Endothelial cell of umbilical vein (primary cell): ENCODE measurements at regions of chr5 and their contacts with region 1.

Region 1: DNA sequence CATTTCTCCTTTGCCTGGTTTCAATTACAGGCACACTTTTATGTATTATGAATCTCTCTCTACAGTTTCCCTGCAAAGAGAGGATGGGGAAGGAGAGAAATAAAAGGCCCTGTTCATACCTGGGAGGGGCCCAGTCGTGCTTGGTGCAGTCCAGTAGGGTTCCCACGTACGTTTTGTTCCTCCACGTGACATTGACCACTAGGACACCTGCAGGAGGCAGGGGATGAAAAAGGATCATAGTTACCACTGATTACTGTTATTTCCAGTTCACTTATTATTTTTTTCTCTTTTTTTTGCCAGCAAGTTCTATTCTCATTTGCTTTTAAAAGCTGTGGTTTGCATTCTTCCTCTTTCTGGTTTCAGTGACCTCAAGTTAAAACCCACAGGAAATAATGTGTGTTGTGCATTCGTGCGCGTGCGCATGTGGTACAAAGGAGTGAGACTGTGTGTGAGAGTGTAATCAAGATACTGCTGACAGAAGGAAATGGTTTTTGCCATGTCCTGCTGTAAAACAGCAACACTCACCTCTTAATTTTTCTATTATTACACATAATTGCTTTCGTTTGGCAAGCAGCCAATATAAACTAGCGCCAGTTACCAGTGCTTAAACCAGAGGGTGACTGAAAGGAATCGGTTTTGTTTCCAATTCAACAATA is 96.8 kb downstream of the ZNF608 start:
- DNase-seq: peak; percentile 98
- H3K4me3 ChIP-seq: peak overlapping the region in 2 of 3 experiments; percentile 17 to 49
- H3K27ac ChIP-seq: peak overlapping the region; percentile 92
- H3K4me1 ChIP-seq: peaks cover 46% of the 10 kb centered on the region
- H3K27me3 ChIP-seq: no peaks in the 10 kb centered on the region
- CTCF ChIP-seq: no peak
- POLR2A ChIP-seq: peak; percentile 60

Region 2: DNA sequence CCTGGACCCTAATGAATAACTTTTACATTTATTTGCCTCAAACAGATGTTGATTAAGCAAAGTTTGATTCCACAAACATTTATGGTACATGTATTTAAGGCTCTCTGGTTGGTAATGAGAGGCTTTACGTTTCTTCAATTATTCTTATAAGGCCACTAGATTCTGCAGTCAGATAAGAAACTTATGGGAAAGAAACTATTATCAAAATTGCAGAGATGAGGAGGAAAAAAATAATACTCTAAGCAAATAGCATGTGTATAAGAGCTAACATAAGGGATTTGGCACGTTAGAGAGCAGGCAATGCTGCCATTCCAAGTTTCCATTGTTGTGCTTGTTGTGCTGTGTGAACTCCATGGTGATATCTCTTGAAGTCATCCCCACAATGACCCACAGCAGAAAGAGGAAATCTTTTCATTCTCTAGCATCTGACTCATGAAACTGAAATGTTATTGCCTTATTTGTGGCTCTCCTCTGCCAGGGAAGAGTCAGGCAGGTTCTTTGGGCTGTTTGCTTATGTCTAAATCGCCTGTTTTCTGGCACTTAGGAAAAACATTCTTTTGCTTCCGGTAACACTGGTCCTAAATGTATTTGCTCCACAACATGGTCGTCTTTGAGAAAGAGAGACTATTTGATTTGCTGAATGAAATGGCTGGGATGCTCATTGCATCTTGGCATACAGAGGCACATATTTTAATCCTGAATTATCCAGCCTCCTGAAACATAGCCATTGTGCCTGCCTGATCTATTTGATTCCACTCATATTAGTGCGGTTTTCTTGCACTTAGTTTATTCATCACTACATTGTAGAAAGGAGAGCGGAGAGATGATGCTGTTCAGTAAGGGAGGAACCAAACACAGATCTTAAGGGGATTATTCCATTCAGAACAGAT is 949.0 kb before region 1 on chr5:
- CTCF ChIA-PET with region 1: no interaction called
- POLR2A ChIA-PET with region 1: no interaction called
- dilution Hi-C with region 1: no loop called
- intact Hi-C with region 1: loop called (anchors 1 kb)
- DNase-seq: peak; percentile 99
- H3K4me3 ChIP-seq: no peak overlapping the region
- H3K27ac ChIP-seq: peak overlapping the region; percentile 93
- H3K4me1 ChIP-seq: peaks cover 21% of the 10 kb centered on the region
- H3K27me3 ChIP-seq: no peaks in the 10 kb centered on the region
- CTCF ChIP-seq: no peak
- POLR2A ChIP-seq: peak; percentile 27

Region 3: DNA sequence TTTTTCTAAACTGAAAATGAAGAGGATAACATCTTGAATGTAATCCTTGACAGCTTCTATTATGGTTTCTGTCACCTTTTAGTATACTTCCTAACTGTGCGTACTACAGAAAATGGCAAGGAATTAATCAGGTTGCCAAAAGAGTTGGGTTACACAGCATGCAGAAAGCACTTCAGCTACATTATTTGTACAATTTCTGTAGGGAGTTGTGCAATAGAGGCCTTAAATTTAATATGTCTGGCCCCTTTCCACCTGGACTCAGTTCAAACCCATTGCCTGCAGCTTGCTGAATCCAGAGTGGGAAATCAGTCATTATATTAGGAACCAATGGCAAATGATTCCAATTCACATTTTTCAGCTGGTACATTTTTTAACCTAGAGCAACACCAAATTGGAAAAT is 588.0 kb before region 1 on chr5:
- CTCF ChIA-PET with region 1: no interaction called
- POLR2A ChIA-PET with region 1: no interaction called
- dilution Hi-C with region 1: no loop called
- intact Hi-C with region 1: loop called (anchors 2 kb)
- DNase-seq: no peak
- H3K4me3 ChIP-seq: no peak overlapping the region
- H3K27ac ChIP-seq: no peak overlapping the region
- H3K4me1 ChIP-seq: peaks cover 15% of the 10 kb centered on the region
- H3K27me3 ChIP-seq: no peaks in the 10 kb centered on the region
- CTCF ChIP-seq: no peak
- POLR2A ChIP-seq: no peak

Region 4: GRCh38 chr5:124343451-124343867 is 306.2 kb before region 1 on chr5:
- CTCF ChIA-PET with region 1: no interaction called
- POLR2A ChIA-PET with region 1: no interaction called
- dilution Hi-C with region 1: no loop called
- intact Hi-C with region 1: no loop called
- DNase-seq: no peak
- H3K4me3 ChIP-seq: no peak overlapping the region
- H3K27ac ChIP-seq: no peak overlapping the region
- H3K4me1 ChIP-seq: no peaks in the 10 kb centered on the region
- H3K27me3 ChIP-seq: peaks cover 2 to 3% of the 10 kb centered on the region in 2 experiments
- CTCF ChIP-seq: no peak
- POLR2A ChIP-seq: no peak

Region 5: DNA sequence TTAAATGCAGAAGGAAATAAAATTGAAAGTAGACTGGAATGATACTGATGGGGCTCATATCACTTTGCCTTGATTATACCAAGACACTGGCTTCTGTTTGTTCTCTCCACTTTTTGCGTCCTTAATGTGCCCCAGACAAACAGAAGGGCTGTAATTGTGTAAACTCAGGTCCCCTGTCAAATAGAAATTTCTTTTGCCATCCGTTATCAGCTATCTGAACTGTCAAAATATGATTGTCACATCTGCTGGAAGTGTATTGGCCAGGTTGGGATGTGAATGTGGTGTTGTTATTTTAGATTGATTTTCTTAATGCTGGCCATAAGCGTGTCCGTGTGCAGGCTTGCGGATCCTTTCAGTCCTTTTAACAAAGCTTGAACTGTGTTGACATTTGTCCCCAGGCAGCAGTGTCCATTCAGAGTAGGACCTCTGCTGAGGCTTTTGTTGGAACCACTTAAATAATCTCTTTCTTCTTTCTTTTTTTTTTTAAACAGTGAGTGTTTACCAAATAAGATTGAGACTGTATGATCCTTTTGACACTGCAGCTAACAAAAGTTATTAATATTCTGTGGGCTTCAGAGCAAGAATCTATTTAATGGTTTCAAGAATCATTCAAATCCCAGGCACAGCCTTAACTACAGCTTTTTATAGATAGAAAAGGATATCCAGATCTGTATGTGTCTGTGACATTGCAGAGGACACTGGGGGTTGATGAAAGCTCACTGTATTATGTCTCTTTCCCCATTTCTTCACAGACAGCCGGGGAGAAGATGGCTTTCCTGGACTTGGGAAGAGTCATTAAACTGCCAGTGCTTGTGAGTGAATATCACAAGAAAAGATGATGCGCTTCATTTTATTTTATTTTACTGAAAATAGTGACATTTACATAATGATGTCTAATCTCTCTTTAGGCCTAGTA is 74.8 kb before region 1 on chr5:
- CTCF ChIA-PET with region 1: no interaction called
- POLR2A ChIA-PET with region 1: no interaction called
- dilution Hi-C with region 1: no loop called
- intact Hi-C with region 1: no loop called
- DNase-seq: no peak
- H3K4me3 ChIP-seq: no peak overlapping the region
- H3K27ac ChIP-seq: no peak overlapping the region
- H3K4me1 ChIP-seq: no peaks in the 10 kb centered on the region
- H3K27me3 ChIP-seq: no peaks in the 10 kb centered on the region
- CTCF ChIP-seq: no peak
- POLR2A ChIP-seq: no peak

Region 6: GRCh38 chr5:124806373-124807077 is 156.9 kb after region 1 on chr5:
- CTCF ChIA-PET with region 1: no interaction called
- POLR2A ChIA-PET with region 1: no interaction called
- dilution Hi-C with region 1: no loop called
- intact Hi-C with region 1: loop called (anchors 1 kb)
- DNase-seq: peak; percentile 94
- H3K4me3 ChIP-seq: no peak overlapping the region
- H3K27ac ChIP-seq: no peak overlapping the region
- H3K4me1 ChIP-seq: peaks cover 5% of the 10 kb centered on the region
- H3K27me3 ChIP-seq: no peaks in the 10 kb centered on the region
- CTCF ChIP-seq: no peak
- POLR2A ChIP-seq: no peak

Region 7: DNA sequence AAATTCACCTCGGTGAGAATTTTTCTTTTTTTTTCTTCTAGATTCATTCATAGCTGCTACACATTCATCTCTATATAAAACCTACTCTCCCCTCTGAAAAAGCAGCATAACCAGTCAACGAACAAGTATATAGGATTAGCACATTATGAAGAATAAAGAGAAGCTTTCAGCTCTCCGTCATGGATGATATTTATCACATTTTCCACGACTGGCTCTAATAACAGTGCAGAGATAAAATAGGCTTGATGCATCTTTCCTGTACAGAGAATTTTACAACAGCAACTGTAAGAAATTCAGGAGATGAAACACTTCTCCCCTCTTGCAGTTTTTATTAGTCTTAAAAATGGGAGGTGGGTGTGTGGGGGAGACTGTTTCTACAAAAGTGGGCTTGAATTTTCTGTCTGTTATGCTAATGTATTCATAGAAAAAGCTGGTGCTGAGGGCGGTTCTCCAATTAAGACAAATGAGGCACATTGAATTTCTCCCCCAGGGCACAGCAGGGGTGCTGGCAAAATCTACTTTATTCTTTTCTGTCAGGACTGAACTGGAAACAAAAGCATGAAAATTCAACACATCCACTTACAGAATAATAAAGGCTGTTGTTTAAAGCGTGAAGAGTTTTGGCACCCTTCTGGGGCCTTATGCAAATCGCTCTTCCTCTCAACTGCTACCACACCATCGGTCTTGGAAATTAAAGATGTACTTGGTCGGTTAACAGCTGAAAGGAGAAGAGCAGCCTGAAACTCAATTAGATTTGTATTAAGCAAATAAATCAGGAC is 330.7 kb after region 1 on chr5:
- CTCF ChIA-PET with region 1: no interaction called
- POLR2A ChIA-PET with region 1: no interaction called
- dilution Hi-C with region 1: no loop called
- intact Hi-C with region 1: no loop called
- DNase-seq: no peak
- H3K4me3 ChIP-seq: no peak overlapping the region
- H3K27ac ChIP-seq: no peak overlapping the region
- H3K4me1 ChIP-seq: no peaks in the 10 kb centered on the region
- H3K27me3 ChIP-seq: no peaks in the 10 kb centered on the region
- CTCF ChIP-seq: no peak
- POLR2A ChIP-seq: no peak

Region 8: GRCh38 chr5:125043781-125044391 is 394.3 kb after region 1 on chr5:
- CTCF ChIA-PET with region 1: no interaction called
- POLR2A ChIA-PET with region 1: no interaction called
- dilution Hi-C with region 1: no loop called
- intact Hi-C with region 1: loop called (anchors 5 kb)
- DNase-seq: peak; percentile 82
- H3K4me3 ChIP-seq: no peak overlapping the region
- H3K27ac ChIP-seq: peak overlapping the region; percentile 10
- H3K4me1 ChIP-seq: peaks cover 34% of the 10 kb centered on the region
- H3K27me3 ChIP-seq: no peaks in the 10 kb centered on the region
- CTCF ChIP-seq: no peak
- POLR2A ChIP-seq: no peak

Region 9: DNA sequence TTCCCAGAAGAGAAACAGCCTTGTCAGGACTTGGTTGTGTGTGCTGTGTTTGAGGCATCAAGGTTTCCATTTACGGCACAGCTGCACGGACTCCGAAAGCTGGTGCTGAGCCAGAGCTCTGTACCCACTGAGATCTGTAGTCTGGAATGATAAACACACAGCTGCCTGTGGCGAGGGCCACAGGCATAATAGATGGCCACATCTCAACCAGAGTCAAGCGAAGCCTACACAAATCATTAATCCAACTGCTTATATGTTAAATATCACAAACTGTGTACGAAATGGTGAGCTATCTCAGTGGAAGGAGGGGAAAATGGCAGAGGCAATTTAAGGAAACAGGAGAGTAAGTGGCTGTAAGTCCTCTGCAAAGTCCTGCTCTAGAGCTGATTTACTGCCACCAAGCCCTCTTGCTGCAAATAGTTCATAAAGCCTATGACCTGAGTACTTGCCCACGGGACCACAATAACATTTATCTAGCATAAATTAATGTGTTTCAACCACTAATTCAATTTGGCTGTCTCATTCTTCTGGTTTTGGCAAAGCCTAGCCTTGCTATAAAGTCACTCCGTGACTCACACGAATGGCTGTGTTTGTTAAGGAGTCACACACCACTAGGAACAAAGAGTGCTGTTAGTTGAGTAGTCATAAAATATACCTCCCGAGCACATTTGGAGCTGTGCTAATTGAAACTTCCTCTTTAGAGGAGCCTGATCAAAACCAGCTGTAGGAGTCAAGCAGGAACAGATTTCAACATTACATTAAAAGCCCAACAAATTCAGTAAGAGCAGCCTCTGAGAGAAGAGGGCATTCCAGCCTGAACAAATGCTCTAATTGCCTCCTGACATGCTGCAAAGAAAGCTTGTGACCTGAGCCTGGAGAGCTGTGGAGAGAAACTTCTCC is 835.4 kb after region 1 on chr5:
- CTCF ChIA-PET with region 1: interaction called, 6 read pairs
- POLR2A ChIA-PET with region 1: no interaction called
- dilution Hi-C with region 1: no loop called
- intact Hi-C with region 1: loop called (anchors 1 kb)
- DNase-seq: peak; percentile 96
- H3K4me3 ChIP-seq: peak overlapping the region in 1 of 3 experiments; percentile 28
- H3K27ac ChIP-seq: peak overlapping the region; percentile 99
- H3K4me1 ChIP-seq: peaks cover 36% of the 10 kb centered on the region
- H3K27me3 ChIP-seq: no peaks in the 10 kb centered on the region
- CTCF ChIP-seq: no peak
- POLR2A ChIP-seq: peak; percentile 72